Gastrocnemius medialis (tissue), 4 donors: ENCODE measurements at regions of chr14 and their contacts with region 1.

Region 1: DNA sequence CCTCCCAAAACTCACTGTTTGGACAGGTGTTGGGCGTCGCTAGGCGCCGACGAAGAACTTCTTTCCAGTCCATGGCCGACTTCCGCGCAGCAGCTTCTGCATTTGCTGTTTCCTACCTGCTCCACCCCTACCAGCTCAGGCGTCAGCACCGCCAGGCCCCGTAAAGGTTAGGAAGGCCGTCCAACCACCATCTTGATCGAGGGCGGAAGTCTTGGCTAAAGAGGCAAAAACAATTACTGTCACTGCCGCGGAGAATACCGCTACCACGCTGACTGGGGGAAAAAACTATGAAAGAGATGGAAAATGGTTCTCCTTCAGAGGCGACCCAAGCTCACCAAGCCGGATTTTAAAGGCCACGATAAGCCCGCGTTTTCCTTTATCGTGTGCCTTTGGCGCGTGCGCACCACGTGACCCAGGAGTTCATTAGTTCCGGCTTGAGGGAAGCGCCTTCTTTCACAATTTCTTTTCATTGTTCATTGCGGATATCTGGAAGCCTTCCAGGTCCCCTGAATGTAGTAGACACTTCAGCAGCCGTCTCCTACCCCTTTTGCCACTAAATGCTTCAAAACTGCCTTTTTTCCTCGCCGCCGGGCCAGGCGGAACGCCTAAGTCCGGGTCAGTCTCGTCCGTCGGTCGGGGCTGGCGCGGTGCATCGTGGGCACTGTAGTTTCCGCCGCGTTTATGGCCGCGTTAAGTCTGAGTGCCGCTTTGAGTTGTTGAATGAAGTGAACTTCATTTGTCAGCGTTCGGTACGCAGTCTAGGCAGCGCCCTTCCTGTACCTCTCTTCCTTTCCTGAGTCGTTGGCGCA is at the starts of genes PPP2R3C and PRORP:
- DNase-seq: peak; percentile 93
- ATAC-seq: peak; percentile 89 to 93
- H3K4me3 ChIP-seq: peak within 1 kb of the TSS; percentile 77 to 95 (median 87)
- H3K27ac ChIP-seq: peak within 1 kb of the TSS; percentile 94 to 98 (median 97)
- H3K4me1 ChIP-seq: peaks cover 18 to 24% of the 10 kb centered on the region in 2 donors
- H3K27me3 ChIP-seq: no peaks in the 10 kb centered on the region
- CTCF ChIP-seq: no peak
- POLR2A ChIP-seq: peak; percentile 56 to 64
- total RNA-seq, gene PPP2R3C: 27.9 to 59.4 (median 33.2) TPM
- total RNA-seq, gene PRORP: 14.8 to 21.8 (median 20.0) TPM

Region 2: DNA sequence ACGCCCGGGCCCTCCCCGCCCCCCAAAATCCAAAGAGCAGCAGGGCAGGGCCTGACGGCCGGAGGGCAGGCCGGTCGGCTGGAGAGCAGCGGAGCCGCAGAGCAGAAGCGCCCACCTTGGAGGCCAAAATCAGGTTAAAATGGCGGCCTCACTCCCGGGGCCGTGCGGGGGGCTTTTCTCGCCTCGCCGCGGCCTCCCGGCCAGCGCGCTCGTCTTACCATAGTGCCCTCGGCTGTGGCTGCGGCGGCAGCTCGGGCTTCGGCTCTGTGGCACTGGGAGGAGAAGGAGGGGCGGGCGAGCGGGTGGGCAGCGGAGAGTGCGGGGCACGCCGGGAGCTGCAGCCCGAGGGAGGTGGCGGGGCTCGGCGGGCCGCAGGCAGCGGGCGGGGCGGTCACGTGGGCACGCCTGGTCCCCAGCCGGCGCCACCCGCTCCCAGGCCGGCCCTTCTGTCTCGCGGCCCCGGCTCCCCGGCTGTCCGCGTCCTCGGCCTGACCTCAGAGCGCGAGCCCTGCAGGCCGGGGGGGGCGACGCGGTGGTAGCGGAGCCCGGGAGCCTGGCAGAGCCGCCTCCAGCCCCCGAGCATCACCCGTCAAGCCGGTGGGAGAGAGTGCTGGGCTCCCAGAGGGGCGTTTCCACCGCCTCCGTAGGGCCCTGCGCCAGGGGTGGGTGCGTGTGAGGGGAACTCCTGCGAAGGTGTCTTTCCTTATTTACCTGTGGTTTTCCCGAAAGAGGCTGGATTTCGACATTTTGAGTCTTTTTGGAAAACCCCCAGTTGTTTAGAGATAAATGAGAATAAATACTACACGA is 407.6 kb before region 1 on chr14 and contains the start of gene CFL2:
- in situ Hi-C with region 1: no loop called
- intact Hi-C with region 1: loop called (anchors 5 kb)
- DNase-seq: peak; percentile 77 to 91
- ATAC-seq: peak; percentile 70 to 73
- H3K4me3 ChIP-seq: peak within 1 kb of the TSS; percentile 74 to 97 (median 94)
- H3K27ac ChIP-seq: peak within 1 kb of the TSS; percentile 96 to 100 (median 98)
- H3K4me1 ChIP-seq: peaks cover 34 to 45% of the 10 kb centered on the region in 2 donors
- H3K27me3 ChIP-seq: no peaks in the 10 kb centered on the region
- CTCF ChIP-seq: no peak
- POLR2A ChIP-seq: peak; percentile 87 to 89
- total RNA-seq, gene CFL2: 331 to 434 (median 371) TPM

Region 3: GRCh38 chr14:34931206-34931605 is 190.9 kb before region 1 on chr14:
- in situ Hi-C with region 1: no loop called
- intact Hi-C with region 1: no loop called
- DNase-seq: no peak
- ATAC-seq: peak; percentile 30 to 50
- H3K4me3 ChIP-seq: no peak overlapping the region
- H3K27ac ChIP-seq: no peak overlapping the region
- H3K4me1 ChIP-seq: no peaks in the 10 kb centered on the region
- H3K27me3 ChIP-seq: no peaks in the 10 kb centered on the region
- CTCF ChIP-seq: no peak
- POLR2A ChIP-seq: no peak

Region 4: GRCh38 chr14:34982417-34983147 is 139.5 kb before region 1 on chr14 and contains the start of gene SRP54:
- in situ Hi-C with region 1: loop called in 1 of 4 experiments (anchors 10 kb)
- intact Hi-C with region 1: loop called (anchors 1 kb)
- DNase-seq: peak; percentile 98 to 99
- ATAC-seq: peak; percentile 98 to 99
- H3K4me3 ChIP-seq: peak within 1 kb of the TSS; percentile 79 to 90 (median 80)
- H3K27ac ChIP-seq: peak within 1 kb of the TSS; percentile 83 to 95 (median 93)
- H3K4me1 ChIP-seq: peaks cover 28 to 36% of the 10 kb centered on the region in 2 donors
- H3K27me3 ChIP-seq: no peaks in the 10 kb centered on the region
- CTCF ChIP-seq: peak in 1 of 5 experiments; percentile 24
- POLR2A ChIP-seq: peak; percentile 74 to 86
- total RNA-seq, gene SRP54: 33.7 to 40.0 (median 34.6) TPM

Region 5: GRCh38 chr14:35292051-35292769 is 170.1 kb after region 1 on chr14 and contains the start of gene PSMA6:
- in situ Hi-C with region 1: no loop called
- intact Hi-C with region 1: loop called (anchors 1 kb)
- DNase-seq: peak; percentile 98 to 99
- ATAC-seq: peak; percentile 95 to 96
- H3K4me3 ChIP-seq: peak within 1 kb of the TSS; percentile 84 to 94 (median 89)
- H3K27ac ChIP-seq: peak within 1 kb of the TSS; percentile 96 to 98 (median 96)
- H3K4me1 ChIP-seq: peaks cover 32 to 39% of the 10 kb centered on the region in 2 donors
- H3K27me3 ChIP-seq: no peaks in the 10 kb centered on the region
- CTCF ChIP-seq: no peak
- POLR2A ChIP-seq: peak; percentile 91
- total RNA-seq, gene PSMA6: 323 to 502 (median 464) TPM

Region 6: DNA sequence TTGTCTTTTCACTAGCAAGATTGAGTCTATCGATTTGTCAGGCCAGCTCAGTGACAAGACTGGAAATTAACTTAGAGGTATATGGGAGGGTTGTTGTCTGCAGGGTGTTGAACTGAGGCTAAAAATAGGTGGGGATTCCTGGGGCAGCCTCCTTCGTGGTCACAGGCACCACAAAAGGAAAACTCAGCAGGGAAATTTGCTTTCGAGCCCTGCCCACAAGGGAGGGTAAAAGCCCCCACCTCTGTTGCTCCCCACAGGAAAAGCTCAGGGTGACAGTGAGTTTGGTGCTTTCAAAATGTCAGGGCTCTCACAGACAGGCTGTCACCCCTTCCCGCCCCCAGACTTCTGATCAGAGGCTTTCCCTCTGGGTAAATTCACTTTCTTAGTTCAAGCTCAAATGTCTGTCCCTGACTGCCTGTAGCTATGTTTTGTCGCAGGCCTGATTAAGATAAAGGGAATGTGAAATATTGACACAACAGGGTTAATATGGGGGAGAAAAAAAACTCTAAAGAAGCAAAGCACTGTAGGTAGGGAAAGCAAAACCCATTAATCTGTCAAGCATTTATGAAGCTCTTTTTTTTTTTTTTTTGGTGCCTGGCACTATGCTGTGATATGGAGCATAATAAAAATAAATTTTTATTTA is 294.1 kb after region 1 on chr14:
- in situ Hi-C with region 1: loop called in 1 of 4 experiments (anchors 10 kb)
- intact Hi-C with region 1: loop called (anchors 5 kb)
- DNase-seq: no peak
- ATAC-seq: no peak
- H3K4me3 ChIP-seq: no peak overlapping the region
- H3K27ac ChIP-seq: no peak overlapping the region
- H3K4me1 ChIP-seq: peaks cover 6 to 13% of the 10 kb centered on the region in 2 donors
- H3K27me3 ChIP-seq: no peaks in the 10 kb centered on the region
- CTCF ChIP-seq: no peak
- POLR2A ChIP-seq: no peak